Dendritic cell treated with granulocyte-macrophage colony-stimulating factor and Interleukin-4, amounts not matched to agents 40 ng/mL and 50 ng/mL, for 4 days (primary cell): ENCODE measurements at regions of chr4 and their contacts with region 1.

Region 1: GRCh38 chr4:83197555-83198235 is 83.2 kb upstream of the PLAC8 start:
- H3K4me3 Mint-ChIP-seq: no peak overlapping the region
- H3K27ac Mint-ChIP-seq: peak overlapping the region; percentile 82
- H3K4me1 Mint-ChIP-seq: peaks cover 50% of the 10 kb centered on the region
- H3K27me3 Mint-ChIP-seq: no peaks in the 10 kb centered on the region

Region 2: DNA sequence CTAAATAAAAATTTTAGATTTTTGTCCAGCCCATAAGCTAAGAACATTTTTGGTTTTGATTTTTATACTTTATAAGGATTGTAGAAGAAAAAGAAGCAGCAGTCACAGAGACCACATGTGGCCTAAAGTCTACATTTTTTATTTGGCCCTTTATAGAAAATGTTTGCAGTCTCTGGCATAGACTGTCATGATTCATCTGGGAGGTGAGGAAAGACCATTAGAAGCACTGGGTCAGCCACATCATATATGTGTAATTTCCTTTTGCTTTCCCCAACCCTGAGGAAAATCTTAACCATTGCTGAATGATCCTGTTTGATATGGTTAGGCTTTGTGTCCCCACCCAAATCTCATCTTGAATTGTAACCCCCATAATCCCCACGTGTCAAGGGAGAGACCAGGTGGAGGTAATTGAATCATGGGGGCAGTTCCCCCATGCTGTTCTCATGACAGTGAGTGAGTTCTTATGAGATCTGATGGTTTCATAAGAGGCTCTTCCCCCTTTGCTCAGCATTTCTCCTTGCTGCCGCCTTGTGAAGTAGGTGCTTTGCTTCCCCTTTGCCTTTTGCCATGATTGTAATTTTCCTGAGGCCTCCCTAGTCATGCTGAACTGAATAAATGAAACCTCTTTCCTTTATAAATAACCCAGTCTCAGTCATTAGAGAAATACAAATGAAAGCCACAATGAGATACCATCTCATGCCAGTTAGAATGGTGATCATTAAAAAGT is 174.8 kb before region 1 on chr4:
- intact Hi-C with region 1: no loop called
- H3K4me3 Mint-ChIP-seq: no peak overlapping the region
- H3K27ac Mint-ChIP-seq: peak overlapping the region; percentile 80
- H3K4me1 Mint-ChIP-seq: peaks cover 14% of the 10 kb centered on the region
- H3K27me3 Mint-ChIP-seq: no peaks in the 10 kb centered on the region

Region 3: DNA sequence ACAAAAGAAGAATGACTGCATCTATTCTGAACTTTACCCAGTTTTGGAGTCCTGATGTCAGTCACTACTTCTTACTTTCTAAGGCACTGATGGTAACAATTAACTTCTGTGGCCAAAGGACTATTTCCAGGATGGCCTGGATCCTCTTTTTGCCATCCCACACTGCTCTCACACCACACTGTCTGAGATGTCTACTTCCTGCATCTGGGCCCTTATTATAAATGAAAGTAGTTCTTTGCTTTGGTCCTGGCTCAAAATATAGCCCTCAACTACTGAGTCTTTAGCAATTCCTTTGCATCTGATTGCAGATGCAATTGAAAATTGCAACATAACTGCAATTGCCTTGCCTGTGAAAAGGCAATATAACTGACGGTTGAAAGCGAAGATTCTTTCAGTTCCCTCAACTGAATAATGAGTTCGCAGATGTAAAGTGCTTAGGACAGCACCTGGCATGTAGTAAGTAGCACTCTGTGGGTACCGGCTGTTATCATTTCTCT is 42.7 kb after region 1 on chr4:
- intact Hi-C with region 1: loop called (anchors 5 kb)
- H3K4me3 Mint-ChIP-seq: peak overlapping the region; percentile 44
- H3K27ac Mint-ChIP-seq: no peak overlapping the region
- H3K4me1 Mint-ChIP-seq: peaks cover 61% of the 10 kb centered on the region
- H3K27me3 Mint-ChIP-seq: peaks cover 6% of the 10 kb centered on the region